H1 (cell line): ENCODE measurements at regions of chr5 and their contacts with region 1.

Region 1: DNA sequence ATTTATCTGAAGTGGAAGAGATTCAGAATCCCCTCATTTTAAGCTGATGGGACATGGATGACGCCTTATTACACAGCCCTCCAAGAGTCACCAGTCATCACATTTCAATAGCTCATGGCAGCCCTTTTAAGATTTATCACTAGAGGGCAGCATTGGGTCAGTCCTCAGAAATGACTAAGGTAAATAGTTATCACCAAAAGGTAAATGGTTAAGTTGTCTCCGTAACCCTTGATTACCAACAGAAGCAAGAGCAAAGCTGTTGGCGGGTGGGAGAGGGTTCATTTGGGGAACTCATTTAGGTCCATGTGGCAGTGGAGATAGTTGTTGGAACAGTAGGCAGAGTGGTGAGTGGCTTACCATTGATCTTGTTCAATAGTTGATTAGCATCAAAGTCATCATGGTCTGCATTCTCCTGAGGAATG is 12.0 kb upstream of the C9 start:
- DNase-seq: peak in 1 of 2 experiments; percentile 58
- H3K4me3 ChIP-seq: no peak overlapping the region
- H3K27ac ChIP-seq: no peak overlapping the region
- H3K4me1 ChIP-seq: peaks cover 0 to 3% (median 1%) of the 10 kb centered on the region in 4 experiments; a peak in 3 of 7 replicates
- H3K27me3 ChIP-seq: no peaks in the 10 kb centered on the region
- CTCF ChIP-seq: peak in 2 of 3 experiments; percentile 79 to 80; a peak in 3 of 4 replicates
- EP300 ChIP-seq: no peak
- POLR2A ChIP-seq: no peak
- RAD21 ChIP-seq: peak; percentile 84 to 90

Region 2: DNA sequence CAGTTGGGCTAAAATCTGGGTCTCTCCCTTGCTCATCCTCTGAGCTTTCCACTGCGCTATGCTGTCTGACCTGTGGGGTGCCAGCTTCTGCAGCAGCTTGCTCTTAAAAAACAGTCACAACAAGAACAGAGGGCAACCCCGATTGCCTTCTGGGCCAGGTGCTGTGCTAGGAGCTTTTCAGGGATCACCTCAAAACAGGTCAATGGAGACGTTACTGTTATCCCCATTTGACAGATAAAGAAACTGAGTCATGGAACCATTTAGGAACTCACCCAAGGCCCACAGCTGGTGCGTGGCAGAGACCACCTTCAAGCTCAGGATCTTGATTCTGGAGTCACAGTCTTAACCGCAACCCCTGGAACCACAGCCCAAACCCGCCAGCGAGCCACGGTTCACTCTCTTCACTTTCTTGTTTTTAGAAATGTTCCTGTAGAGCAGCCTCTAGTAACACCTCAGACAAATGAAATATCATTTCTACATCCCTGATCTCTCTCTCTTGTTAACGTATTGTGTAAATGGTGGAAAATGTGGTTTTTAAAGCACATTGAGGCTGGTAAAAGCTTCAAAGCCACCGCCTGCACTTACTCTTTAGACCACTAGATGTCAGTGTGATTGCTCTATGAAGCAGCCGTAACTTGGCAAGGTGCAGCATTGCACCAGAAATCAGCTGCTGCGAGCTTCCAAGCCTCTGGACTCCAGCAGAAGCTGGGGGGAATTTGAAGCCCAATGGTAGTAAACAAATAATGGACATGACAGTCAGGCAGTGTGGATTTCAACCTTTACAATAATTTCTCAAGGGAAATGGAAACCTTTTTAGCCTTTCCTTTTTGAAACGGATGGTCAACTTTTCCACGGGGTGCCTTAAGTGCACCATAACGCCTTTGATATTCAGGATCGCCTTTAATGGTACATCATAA is 158.7 kb before region 1 on chr5:
- CTCF ChIA-PET with region 1: interaction called, 11 read pairs
- POLR2A ChIA-PET with region 1: no interaction called
- DNase-seq: peak in 1 of 2 experiments; percentile 83
- H3K4me3 ChIP-seq: no peak overlapping the region
- H3K27ac ChIP-seq: no peak overlapping the region
- H3K4me1 ChIP-seq: peaks cover 0 to 2% (median 0%) of the 10 kb centered on the region in 4 experiments; a peak in 1 of 7 replicates
- H3K27me3 ChIP-seq: no peaks in the 10 kb centered on the region
- CTCF ChIP-seq: peak; percentile 43 to 97 (median 84)
- EP300 ChIP-seq: no peak
- POLR2A ChIP-seq: no peak
- RAD21 ChIP-seq: peak; percentile 80 to 88

Region 3: GRCh38 chr5:39400713-39401578 is 24.6 kb after region 1 on chr5:
- CTCF ChIA-PET with region 1: interaction called, 15 read pairs
- POLR2A ChIA-PET with region 1: no interaction called
- DNase-seq: no peak
- H3K4me3 ChIP-seq: no peak overlapping the region
- H3K27ac ChIP-seq: no peak overlapping the region
- H3K4me1 ChIP-seq: no peaks in the 10 kb centered on the region; a peak in 2 of 7 replicates
- H3K27me3 ChIP-seq: no peaks in the 10 kb centered on the region
- CTCF ChIP-seq: no peak
- EP300 ChIP-seq: no peak
- POLR2A ChIP-seq: no peak
- RAD21 ChIP-seq: no peak

Region 4: DNA sequence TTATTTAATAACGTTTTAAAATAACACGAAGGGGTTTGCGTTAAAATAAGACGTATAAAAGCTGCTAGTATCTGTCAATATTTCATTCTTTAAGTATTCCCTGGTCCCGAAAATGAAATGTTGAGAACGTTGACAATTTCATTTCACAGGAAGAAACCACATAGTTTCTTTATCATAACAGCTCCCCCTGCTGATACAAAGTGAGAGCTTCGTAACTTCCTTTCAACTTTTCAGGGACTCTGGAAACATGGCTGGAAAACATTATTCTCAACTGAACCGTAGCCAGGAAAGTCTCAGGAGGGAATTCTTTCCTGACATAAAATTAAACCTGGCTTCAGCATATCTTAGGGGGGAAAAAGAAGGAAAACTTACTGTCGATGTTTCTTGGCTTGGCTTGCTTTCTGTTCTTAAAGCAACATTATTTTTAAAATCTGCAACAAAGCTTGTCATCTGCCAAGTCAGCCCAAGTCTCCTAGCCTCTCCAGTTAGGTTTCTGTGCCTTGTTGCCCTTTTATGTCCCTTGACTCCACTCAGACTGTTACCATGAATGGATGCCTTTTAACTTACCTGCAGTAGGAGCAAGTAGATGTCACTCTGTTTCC is 171.3 kb after region 1 on chr5:
- CTCF ChIA-PET with region 1: interaction called, 90 read pairs
- POLR2A ChIA-PET with region 1: no interaction called
- DNase-seq: no peak
- H3K4me3 ChIP-seq: no peak overlapping the region
- H3K27ac ChIP-seq: no peak overlapping the region
- H3K4me1 ChIP-seq: peaks cover 0 to 4% (median 0%) of the 10 kb centered on the region in 4 experiments; a peak in 1 of 7 replicates
- H3K27me3 ChIP-seq: no peaks in the 10 kb centered on the region
- CTCF ChIP-seq: peak in 2 of 3 experiments; percentile 59 to 67; a peak in 3 of 4 replicates
- EP300 ChIP-seq: no peak
- POLR2A ChIP-seq: no peak
- RAD21 ChIP-seq: peak; percentile 74

Region 5: GRCh38 chr5:39578887-39579497 is 202.7 kb after region 1 on chr5:
- CTCF ChIA-PET with region 1: interaction called, 57 read pairs
- POLR2A ChIA-PET with region 1: no interaction called
- DNase-seq: no peak
- H3K4me3 ChIP-seq: no peak overlapping the region
- H3K27ac ChIP-seq: no peak overlapping the region
- H3K4me1 ChIP-seq: no peaks in the 10 kb centered on the region
- H3K27me3 ChIP-seq: no peaks in the 10 kb centered on the region
- CTCF ChIP-seq: peak in 1 of 3 experiments; percentile 21; a peak in 2 of 4 replicates
- EP300 ChIP-seq: no peak
- POLR2A ChIP-seq: no peak
- RAD21 ChIP-seq: peak in 1 of 2 experiments; percentile 56; a peak in 3 of 4 replicates